Activated T-helper 1 cell treated with anti-CD3 and anti-CD28 coated beads, Interleukin-12 subunit alpha, Interleukin-12 subunit beta, Interleukin-2, Interleukin-4 antibody, amounts not matched to agents 30 ng/mL and 10 ng/mL and 1 ng/mL, durations not matched to agents 14 hours and 24 hours and 36 hours (primary cell): ENCODE measurements at regions of chr3 and their contacts with region 1.

Region 1: GRCh38 chr3:131033480-131034080 is 6.9 kb downstream of the NEK11 start:
- DNase-seq: peak; percentile 23
- H3K4me3 Mint-ChIP-seq: no peak overlapping the region
- H3K27ac Mint-ChIP-seq: no peak overlapping the region
- H3K4me1 Mint-ChIP-seq: no peaks in the 10 kb centered on the region
- H3K27me3 Mint-ChIP-seq: peaks cover 5% of the 10 kb centered on the region

Region 2: GRCh38 chr3:131174752-131175151 is 141.2 kb after region 1 on chr3:
- intact Hi-C with region 1: loop called (anchors 10 kb)
- DNase-seq: peak; percentile 29
- H3K4me3 Mint-ChIP-seq: no peak overlapping the region
- H3K27ac Mint-ChIP-seq: no peak overlapping the region
- H3K4me1 Mint-ChIP-seq: peaks cover 8% of the 10 kb centered on the region
- H3K27me3 Mint-ChIP-seq: peaks cover 2% of the 10 kb centered on the region

Region 3: DNA sequence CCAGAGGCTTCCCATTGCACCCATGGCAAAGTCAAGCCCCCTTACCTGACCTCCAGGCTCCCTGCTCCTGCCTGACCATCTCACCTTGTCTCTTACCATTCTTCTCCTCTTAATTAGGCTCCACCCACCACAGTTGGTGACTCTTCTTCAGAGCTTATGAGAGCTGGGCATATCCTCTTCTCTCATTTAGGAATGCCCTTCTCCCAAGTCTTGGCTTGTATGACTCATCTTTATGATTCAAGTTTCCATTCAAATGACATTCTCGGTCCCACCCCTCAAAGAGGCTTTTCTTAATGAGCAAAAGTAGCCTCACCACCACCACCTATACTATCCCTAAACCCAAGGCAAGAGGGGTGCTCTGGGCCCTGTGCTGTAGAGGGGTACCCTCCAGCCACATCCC is 292.7 kb after region 1 on chr3:
- intact Hi-C with region 1: no loop called
- DNase-seq: no peak
- H3K4me3 Mint-ChIP-seq: no peak overlapping the region
- H3K27ac Mint-ChIP-seq: no peak overlapping the region
- H3K4me1 Mint-ChIP-seq: no peaks in the 10 kb centered on the region
- H3K27me3 Mint-ChIP-seq: peaks cover 3% of the 10 kb centered on the region

Region 4: DNA sequence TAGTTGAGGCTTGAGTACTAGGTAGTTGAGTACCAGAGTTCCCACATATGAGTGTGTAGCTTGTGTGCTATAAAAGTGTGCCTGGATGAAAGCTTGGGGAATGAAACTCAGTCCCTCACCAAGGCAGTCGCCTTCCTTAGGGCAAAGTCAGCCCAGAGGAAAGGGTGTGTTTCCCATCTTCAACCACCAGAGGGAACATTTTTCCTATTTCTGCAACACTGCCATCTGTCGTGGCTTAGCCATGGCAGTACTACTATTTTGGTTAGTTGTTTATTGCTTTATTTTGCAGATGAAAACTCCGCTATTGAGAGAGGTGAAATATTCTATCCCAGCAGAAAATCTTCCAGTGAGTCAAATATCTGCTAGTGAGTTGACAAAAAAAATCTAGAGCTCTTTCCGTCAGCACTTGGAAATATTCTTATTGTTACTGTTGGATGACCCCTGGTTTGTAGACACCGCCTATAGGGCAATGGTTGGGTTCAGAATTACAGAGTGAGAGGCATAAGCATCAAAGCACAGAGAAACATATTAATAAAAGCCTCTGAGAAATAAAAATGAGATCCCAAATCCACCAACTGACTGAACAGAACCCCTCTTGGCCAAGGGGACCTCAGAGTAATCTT is 761.3 kb after region 1 on chr3:
- intact Hi-C with region 1: loop called (anchors 5 kb)
- DNase-seq: peak; percentile 8
- H3K4me3 Mint-ChIP-seq: no peak overlapping the region
- H3K27ac Mint-ChIP-seq: no peak overlapping the region
- H3K4me1 Mint-ChIP-seq: peaks cover 10% of the 10 kb centered on the region
- H3K27me3 Mint-ChIP-seq: no peaks in the 10 kb centered on the region

Region 5: DNA sequence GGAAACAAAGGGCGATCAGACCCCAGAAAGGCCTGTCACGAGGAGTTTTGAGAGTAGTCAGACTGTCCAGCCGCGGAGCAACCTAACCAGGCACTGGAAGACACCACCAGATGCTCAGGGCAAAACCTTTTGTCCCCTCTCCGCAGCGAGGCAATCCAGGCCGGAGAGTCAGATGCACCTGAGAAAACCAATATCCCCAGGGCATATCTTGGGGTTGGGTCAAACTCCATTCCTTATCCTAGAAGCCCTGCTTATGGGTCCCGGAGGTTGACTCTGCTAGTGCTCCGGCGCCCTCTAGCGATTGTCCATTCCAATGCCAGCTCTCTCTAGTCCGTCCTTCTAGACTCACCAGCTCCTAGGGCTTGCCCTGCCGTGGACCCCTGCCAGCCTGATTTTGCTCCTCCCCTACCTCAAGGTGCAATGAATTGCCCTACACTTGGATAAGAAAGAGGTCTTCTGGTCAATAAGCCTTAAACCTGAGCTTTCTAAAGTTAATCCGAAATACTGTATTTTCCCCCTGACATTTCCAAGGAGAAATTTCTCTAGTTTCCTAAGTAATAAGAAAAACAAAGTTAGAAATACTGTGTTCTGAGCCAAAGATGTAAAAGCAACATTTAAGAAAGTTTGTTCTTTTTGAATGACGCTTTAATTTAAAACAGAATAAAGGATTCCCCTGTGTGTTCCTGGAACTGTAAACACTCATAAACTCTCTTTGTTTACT is 995.8 kb after region 1 on chr3:
- intact Hi-C with region 1: loop called (anchors 1 kb)
- DNase-seq: peak; percentile 34
- H3K4me3 Mint-ChIP-seq: no peak overlapping the region
- H3K27ac Mint-ChIP-seq: no peak overlapping the region
- H3K4me1 Mint-ChIP-seq: peaks cover 3% of the 10 kb centered on the region
- H3K27me3 Mint-ChIP-seq: peaks cover 36% of the 10 kb centered on the region

Region 6: GRCh38 chr3:132180337-132180791 is 1146.8 kb after region 1 on chr3:
- intact Hi-C with region 1: loop called (anchors 5 kb)
- DNase-seq: no peak
- H3K4me3 Mint-ChIP-seq: no peak overlapping the region
- H3K27ac Mint-ChIP-seq: no peak overlapping the region
- H3K4me1 Mint-ChIP-seq: peaks cover 7% of the 10 kb centered on the region
- H3K27me3 Mint-ChIP-seq: peaks cover 7% of the 10 kb centered on the region

Region 7: DNA sequence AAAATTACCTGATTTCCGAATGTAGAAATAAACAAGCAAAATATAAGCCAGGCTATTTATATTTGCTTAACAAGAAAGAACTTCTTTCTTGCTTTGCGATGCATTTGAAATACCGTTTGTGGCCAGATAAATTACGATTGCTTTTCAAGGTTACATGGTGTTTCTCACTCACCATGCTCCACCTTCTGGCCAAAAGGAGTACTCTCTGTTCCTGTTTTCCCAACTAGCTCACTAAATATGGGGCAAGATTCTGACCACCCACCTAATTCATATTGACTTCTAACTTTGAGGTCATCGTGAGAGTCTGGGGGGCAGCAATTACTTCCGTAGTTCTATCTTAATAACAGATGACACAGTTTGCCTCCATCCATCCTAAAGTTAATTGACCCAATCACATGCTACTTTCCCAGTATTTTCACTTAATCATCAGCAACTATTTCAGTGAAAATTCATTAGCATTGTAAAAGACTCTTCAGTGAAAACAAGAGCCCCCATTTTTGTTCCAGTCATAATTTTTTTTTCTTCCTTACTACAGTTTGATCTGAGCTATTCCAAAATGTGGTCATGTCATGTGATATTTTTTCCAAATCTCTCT is 1309.5 kb after region 1 on chr3:
- intact Hi-C with region 1: loop called (anchors 10 kb)
- DNase-seq: no peak
- H3K4me3 Mint-ChIP-seq: no peak overlapping the region
- H3K27ac Mint-ChIP-seq: no peak overlapping the region
- H3K4me1 Mint-ChIP-seq: no peaks in the 10 kb centered on the region
- H3K27me3 Mint-ChIP-seq: peaks cover 23% of the 10 kb centered on the region